A673 (cell line): ENCODE measurements at regions of chr5 and their contacts with region 1.

Region 1: GRCh38 chr5:81751009-81751835 is at the start of gene SSBP2:
- DNase-seq: peak; percentile 99
- H3K4me3 ChIP-seq: peak within 1 kb of the TSS; percentile 82
- H3K27ac ChIP-seq: peak within 1 kb of the TSS; percentile 95
- H3K4me1 ChIP-seq: peaks cover 71% of the 10 kb centered on the region
- H3K27me3 ChIP-seq: no peaks in the 10 kb centered on the region
- CTCF ChIP-seq: no peak
- total RNA-seq, gene SSBP2: 42.8 and 53.7 TPM in 2 replicates

Region 2: DNA sequence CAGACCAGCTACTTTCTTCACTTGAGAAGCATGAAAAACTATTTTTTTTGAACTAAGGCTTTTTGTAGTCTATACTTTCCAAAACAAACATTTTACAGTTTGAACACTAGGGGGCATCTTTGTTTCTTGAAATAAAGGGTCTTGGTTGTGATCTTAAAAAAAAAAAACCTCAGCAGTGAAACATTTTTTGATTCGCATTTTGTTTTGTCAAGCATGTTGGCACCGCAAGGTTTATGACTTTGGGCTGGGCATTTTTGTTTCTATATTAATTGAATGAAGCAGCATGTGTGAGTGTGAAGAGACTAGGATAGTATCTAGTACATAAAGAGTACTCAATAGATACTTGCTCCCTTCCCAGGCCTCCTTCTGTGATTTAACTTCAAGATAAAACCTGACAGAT is 325.7 kb before region 1 on chr5:
- CTCF ChIA-PET with region 1: no interaction called
- POLR2A ChIA-PET with region 1: no interaction called
- intact Hi-C with region 1: loop called (anchors 2 kb)
- DNase-seq: peak; percentile 76
- H3K4me3 ChIP-seq: no peak overlapping the region
- H3K27ac ChIP-seq: no peak overlapping the region
- H3K4me1 ChIP-seq: peaks cover 14% of the 10 kb centered on the region
- H3K27me3 ChIP-seq: no peaks in the 10 kb centered on the region
- CTCF ChIP-seq: peak; percentile 69

Region 3: DNA sequence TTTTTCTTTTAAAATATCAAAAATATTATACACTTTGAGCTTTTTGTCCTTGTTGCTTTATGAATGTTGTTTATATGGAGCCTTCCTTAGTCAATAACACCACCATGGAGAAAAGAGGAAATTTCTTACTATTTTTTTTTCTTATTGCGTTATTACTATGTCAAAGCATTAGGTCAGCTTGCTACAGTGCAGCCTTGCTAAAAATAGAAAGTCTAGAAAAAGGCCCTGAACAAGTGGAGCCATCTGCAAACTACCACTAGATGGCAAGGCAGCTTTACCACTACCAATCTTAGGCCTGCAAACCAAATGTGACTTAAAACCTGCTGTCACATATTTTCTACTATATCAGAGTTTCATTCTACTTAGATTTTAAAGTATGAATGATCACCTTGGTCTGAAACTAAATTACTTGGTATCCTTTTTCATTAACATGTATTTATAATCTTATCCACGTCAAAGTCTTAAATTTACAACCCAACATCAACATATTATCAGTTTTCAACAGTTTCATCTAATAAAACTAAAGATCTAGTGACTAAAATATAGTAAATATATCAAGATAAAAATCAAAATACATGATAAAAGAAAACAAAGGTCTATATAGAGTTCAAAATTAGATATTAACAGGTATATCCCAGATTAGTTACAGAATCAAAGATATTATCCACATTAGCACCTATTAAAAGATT is 244.2 kb before region 1 on chr5:
- CTCF ChIA-PET with region 1: interaction called, 7 read pairs
- POLR2A ChIA-PET with region 1: no interaction called
- intact Hi-C with region 1: loop called (anchors 1 kb)
- DNase-seq: peak; percentile 89
- H3K4me3 ChIP-seq: no peak overlapping the region
- H3K27ac ChIP-seq: no peak overlapping the region
- H3K4me1 ChIP-seq: peaks cover 23% of the 10 kb centered on the region
- H3K27me3 ChIP-seq: no peaks in the 10 kb centered on the region
- CTCF ChIP-seq: peak; percentile 88

Region 4: DNA sequence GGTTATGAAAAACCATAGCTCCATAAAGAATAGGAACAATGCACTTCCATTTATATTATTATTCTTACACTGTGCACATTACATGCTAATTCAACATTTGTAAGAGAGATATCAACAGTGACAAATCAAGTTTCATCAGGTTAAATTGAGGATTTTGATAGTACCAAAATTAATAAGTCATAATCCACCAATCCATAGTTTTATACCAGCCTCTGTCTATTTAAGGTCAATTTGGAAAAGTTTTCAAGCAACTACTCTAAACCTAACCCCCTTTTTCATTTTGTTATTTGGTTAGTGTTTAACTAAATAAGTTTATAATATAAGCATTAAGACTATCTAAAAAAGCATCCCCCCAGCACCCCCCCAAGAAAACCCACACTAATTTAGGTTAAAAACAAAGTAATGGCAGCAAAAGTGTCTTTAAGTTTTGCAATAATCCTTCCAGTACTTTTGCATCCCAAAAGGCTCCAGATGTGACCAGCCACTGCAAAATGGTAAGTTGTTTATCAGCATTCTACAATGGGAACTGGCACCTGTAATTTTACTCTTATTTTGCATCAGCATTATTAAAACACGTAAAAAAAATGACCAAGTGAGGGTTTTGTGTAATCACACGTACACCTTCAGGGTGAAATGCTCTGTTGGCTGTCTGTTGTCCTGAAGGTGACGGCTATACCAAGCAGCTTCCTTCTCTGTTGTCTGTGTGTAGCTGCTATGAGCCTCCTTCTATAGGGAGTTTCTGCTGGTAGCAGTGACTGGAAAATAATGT is 36.4 kb after region 1 on chr5:
- CTCF ChIA-PET with region 1: interaction called, 5 read pairs
- POLR2A ChIA-PET with region 1: no interaction called
- intact Hi-C with region 1: loop called (anchors 1 kb)
- DNase-seq: peak; percentile 89
- H3K4me3 ChIP-seq: no peak overlapping the region
- H3K27ac ChIP-seq: peak overlapping the region; percentile 72
- H3K4me1 ChIP-seq: peaks cover 32% of the 10 kb centered on the region
- H3K27me3 ChIP-seq: no peaks in the 10 kb centered on the region
- CTCF ChIP-seq: no peak

Region 5: GRCh38 chr5:81851481-81852178 is 100.4 kb after region 1 on chr5:
- CTCF ChIA-PET with region 1: interaction called, 29 read pairs
- POLR2A ChIA-PET with region 1: interaction called, 11 read pairs
- intact Hi-C with region 1: loop called (anchors 1 kb)
- DNase-seq: peak; percentile 98
- H3K4me3 ChIP-seq: peak overlapping the region; percentile 37
- H3K27ac ChIP-seq: peak overlapping the region; percentile 98
- H3K4me1 ChIP-seq: peaks cover 71% of the 10 kb centered on the region
- H3K27me3 ChIP-seq: no peaks in the 10 kb centered on the region
- CTCF ChIP-seq: no peak

Region 6: GRCh38 chr5:81971712-81972495 is 220.7 kb after region 1 on chr5 and contains the start of gene ATG10:
- CTCF ChIA-PET with region 1: no interaction called
- POLR2A ChIA-PET with region 1: no interaction called
- intact Hi-C with region 1: loop called (anchors 2 kb)
- DNase-seq: peak; percentile 96
- H3K4me3 ChIP-seq: peak within 1 kb of the TSS; percentile 81
- H3K27ac ChIP-seq: peak within 1 kb of the TSS; percentile 99
- H3K4me1 ChIP-seq: peaks cover 10% of the 10 kb centered on the region
- H3K27me3 ChIP-seq: no peaks in the 10 kb centered on the region
- CTCF ChIP-seq: no peak
- total RNA-seq, gene ATG10: 17.1 and 18.1 TPM in 2 replicates

Region 7: GRCh38 chr5:82421119-82421518 is 669.9 kb after region 1 on chr5:
- CTCF ChIA-PET with region 1: no interaction called
- POLR2A ChIA-PET with region 1: no interaction called
- intact Hi-C with region 1: no loop called
- DNase-seq: peak; percentile 46
- H3K4me3 ChIP-seq: no peak overlapping the region
- H3K27ac ChIP-seq: no peak overlapping the region
- H3K4me1 ChIP-seq: no peaks in the 10 kb centered on the region
- H3K27me3 ChIP-seq: no peaks in the 10 kb centered on the region
- CTCF ChIP-seq: no peak